ENCODE measurements at regions of chr19 and their contacts with region 1.

Region 1: DNA sequence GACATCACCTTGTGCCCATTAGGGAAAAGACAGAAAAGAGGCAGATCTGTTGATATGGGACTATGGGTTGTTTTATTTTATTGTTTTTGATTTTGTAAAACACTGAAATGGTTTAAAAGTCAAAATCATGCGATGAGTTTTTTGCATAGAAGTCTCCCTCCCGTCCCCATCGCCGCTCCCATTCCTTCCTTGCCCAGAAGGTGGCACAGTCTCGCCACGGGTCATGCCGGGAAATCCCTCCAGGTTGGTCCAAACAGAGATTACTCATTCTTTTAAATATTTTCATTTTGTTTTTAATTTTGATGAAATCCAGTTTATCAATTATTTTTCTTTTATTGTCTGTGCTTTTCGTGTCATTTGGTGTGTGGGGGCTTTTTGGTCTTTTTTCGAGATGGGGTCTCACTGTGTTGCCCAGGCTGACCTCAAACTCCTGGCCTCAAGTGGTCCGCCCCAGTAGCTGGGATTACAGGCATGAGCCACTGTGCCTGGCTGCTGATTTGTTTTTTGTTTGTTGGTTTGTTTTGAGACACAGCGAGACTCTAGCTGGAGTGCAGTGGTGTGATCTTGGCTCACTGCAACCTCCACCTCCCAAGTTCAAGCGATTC is 9.2 kb downstream of the PGPEP1 start:
- DNase-seq: peak; percentile 53 to 67 (median 54)
- H3K4me3 ChIP-seq: no peak overlapping the region
- H3K4me3 Mint-ChIP-seq: no peak overlapping the region
- H3K27ac ChIP-seq: no peak overlapping the region
- H3K27ac Mint-ChIP-seq: no peak overlapping the region
- H3K4me1 ChIP-seq: peaks cover 0 to 3% of the 10 kb centered on the region in 2 donors
- H3K4me1 Mint-ChIP-seq: peaks cover 13% of the 10 kb centered on the region
- H3K27me3 ChIP-seq: no peaks in the 10 kb centered on the region
- H3K27me3 Mint-ChIP-seq: peaks cover 0 to 1% (median 0%) of the 10 kb centered on the region in 3 donors
- CTCF ChIP-seq: peak; percentile 77

Region 2: GRCh38 chr19:18304458-18305310 is 44.9 kb before region 1 on chr19:
- intact Hi-C with region 1: no loop called
- DNase-seq: peak; percentile 84 to 86 (median 85)
- H3K4me3 ChIP-seq: peak overlapping the region; percentile 38 to 76 (median 45)
- H3K4me3 Mint-ChIP-seq: peak overlapping the region; percentile 88 to 92
- H3K27ac ChIP-seq: peak overlapping the region; percentile 87 to 98
- H3K27ac Mint-ChIP-seq: peak overlapping the region; percentile 97 to 100 (median 99)
- H3K4me1 ChIP-seq: peaks cover 50 to 57% of the 10 kb centered on the region in 2 donors
- H3K4me1 Mint-ChIP-seq: peaks cover 42% of the 10 kb centered on the region
- H3K27me3 ChIP-seq: no peaks in the 10 kb centered on the region
- H3K27me3 Mint-ChIP-seq: no peaks in the 10 kb centered on the region
- CTCF ChIP-seq: no peak

Region 3: GRCh38 chr19:18408053-18408476 is 58.4 kb after region 1 on chr19:
- intact Hi-C with region 1: loop called (anchors 1 to 2 kb)
- DNase-seq: peak; percentile 35 to 59 (median 58)
- H3K4me3 ChIP-seq: no peak overlapping the region
- H3K4me3 Mint-ChIP-seq: no peak overlapping the region
- H3K27ac ChIP-seq: no peak overlapping the region
- H3K27ac Mint-ChIP-seq: peak overlapping the region in 3 of 7 donors; percentile 35 to 62 (median 45)
- H3K4me1 ChIP-seq: peaks cover 20 to 32% of the 10 kb centered on the region in 2 donors
- H3K4me1 Mint-ChIP-seq: peaks cover 31% of the 10 kb centered on the region
- H3K27me3 ChIP-seq: no peaks in the 10 kb centered on the region
- H3K27me3 Mint-ChIP-seq: peaks cover 2 to 6% (median 6%) of the 10 kb centered on the region in 3 donors
- CTCF ChIP-seq: peak; percentile 75

Measured in CD14-positive monocyte (primary cell).